Endothelial cell of umbilical vein (primary cell): ENCODE measurements at regions of chr14 and their contacts with region 1.

Region 1: DNA sequence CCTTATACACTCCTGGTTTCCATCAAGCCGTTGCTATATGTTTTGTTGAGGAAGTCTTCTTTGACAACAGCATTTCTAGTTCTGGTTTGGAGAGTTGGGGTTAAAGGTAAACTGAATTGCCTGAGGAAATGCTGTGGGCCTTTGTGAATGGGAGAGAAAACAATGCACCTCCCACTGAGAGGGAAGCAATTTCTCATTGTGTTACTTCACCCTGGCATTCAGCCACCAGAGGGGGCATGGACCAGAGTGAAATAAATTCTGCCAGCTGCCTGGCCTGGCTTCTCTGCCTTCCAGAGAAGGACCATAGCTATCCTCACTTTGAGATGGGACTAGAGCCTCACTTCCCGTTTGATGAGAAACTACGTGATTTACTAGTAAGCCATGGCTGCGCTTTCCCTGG is 475.3 kb downstream of the EGLN3 start:
- DNase-seq: peak; percentile 88
- H3K4me3 ChIP-seq: no peak overlapping the region
- H3K27ac ChIP-seq: no peak overlapping the region
- H3K4me1 ChIP-seq: peaks cover 8% of the 10 kb centered on the region
- H3K27me3 ChIP-seq: no peaks in the 10 kb centered on the region
- CTCF ChIP-seq: peak; percentile 60 to 74
- POLR2A ChIP-seq: no peak

Region 2: DNA sequence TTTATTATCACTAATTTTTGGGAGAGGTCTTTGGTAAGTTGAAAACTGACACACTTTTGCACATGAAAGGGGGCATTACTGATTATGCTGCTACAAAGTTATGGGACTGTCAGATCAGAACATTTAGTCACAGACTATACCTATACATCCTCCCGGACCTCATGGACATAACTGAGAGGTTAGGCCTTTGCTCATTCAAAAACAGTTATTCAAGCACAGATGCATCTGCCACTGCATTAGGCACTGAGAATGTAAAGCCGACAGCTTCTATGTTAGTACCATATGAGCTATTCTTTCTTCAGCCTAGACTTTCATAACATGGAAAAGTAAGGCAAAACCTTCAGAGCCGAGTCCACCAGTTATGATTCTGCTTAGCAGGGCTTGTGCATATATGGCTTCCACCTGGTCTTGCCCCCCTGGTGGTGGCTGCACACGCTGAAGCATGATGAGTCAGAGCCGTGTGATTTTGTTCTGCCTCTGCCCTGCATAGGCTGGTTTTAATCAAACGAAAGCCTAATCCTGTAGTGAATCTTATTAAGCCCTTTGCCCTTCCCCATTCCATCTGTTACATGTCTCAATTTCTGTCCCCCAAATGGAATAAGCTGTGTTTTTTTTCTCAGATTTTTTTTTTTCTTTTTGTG is 1250.8 kb before region 1 on chr14:
- CTCF ChIA-PET with region 1: no interaction called
- POLR2A ChIA-PET with region 1: no interaction called
- dilution Hi-C with region 1: no loop called
- intact Hi-C with region 1: no loop called
- DNase-seq: peak; percentile 6
- H3K4me3 ChIP-seq: no peak overlapping the region
- H3K27ac ChIP-seq: no peak overlapping the region
- H3K4me1 ChIP-seq: no peaks in the 10 kb centered on the region
- H3K27me3 ChIP-seq: peaks cover 0 to 1% of the 10 kb centered on the region in 2 experiments
- CTCF ChIP-seq: peak; percentile 5 to 18
- POLR2A ChIP-seq: no peak

Region 3: DNA sequence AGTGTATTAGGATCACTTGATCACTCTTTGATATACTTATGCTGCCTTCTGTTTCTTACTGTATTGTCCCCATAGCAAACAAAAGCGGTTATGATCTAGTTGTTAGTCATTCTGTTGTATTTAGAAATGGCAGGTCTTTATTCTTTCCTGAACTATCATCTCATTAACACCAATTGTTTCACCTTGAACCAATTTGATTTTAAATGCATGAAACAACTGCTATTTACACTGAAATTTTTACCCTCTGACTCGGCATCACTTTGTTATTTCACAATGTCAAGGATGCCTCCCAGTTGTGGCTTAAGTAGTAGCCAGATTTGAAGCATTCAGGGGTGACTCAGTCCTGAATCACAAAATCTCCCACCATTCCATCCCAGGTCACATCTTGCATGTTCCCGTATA is 171.8 kb after region 1 on chr14:
- CTCF ChIA-PET with region 1: interaction called, 4 read pairs
- POLR2A ChIA-PET with region 1: no interaction called
- dilution Hi-C with region 1: no loop called
- intact Hi-C with region 1: loop called (anchors 2 kb)
- DNase-seq: peak; percentile 85
- H3K4me3 ChIP-seq: no peak overlapping the region
- H3K27ac ChIP-seq: peak overlapping the region; percentile 90
- H3K4me1 ChIP-seq: peaks cover 30% of the 10 kb centered on the region
- H3K27me3 ChIP-seq: no peaks in the 10 kb centered on the region
- CTCF ChIP-seq: no peak
- POLR2A ChIP-seq: no peak

Region 4: GRCh38 chr14:33676135-33676566 is 200.5 kb after region 1 on chr14:
- CTCF ChIA-PET with region 1: interaction called, 7 read pairs
- POLR2A ChIA-PET with region 1: no interaction called
- dilution Hi-C with region 1: no loop called
- intact Hi-C with region 1: loop called (anchors 1 kb)
- DNase-seq: peak; percentile 26
- H3K4me3 ChIP-seq: no peak overlapping the region
- H3K27ac ChIP-seq: no peak overlapping the region
- H3K4me1 ChIP-seq: peaks cover 20% of the 10 kb centered on the region
- H3K27me3 ChIP-seq: no peaks in the 10 kb centered on the region
- CTCF ChIP-seq: peak; percentile 17 to 29
- POLR2A ChIP-seq: no peak

Region 5: DNA sequence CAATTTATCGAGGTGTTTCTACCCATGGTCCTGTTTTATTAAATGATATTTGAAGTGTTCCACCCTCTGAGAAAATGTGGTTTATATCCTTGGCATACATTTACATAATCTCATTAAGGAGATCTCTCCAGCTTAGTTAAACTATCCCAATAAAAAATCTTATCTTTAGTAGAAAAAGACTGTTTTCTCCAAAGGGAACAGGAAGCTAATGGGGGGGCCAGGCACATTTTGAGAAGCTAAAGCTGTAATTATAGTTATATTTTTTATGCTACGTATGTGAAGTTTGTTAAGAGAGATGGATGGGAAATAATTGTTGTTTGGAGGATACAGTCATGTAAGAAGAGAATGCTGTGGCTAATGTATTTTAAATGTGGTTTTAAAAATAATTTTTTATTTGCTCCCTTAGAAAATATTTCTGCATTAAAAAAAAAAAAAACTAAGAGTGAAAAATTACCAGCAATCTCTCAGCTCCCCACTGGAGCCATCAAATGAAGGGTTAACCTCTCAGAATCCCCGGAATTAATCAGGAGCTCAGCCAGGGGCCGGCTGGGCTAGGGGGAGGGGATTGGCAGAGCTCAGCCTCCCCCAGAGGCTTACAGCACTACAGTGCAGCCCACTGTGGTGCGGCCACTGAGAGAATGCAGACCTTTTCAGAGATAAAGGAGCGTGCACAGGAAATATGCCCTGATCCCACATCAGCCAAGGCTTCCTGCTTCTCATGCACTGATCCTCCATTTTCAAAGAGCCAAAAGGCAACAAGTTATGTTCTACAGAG is 289.4 kb after region 1 on chr14:
- CTCF ChIA-PET with region 1: interaction called, 4 read pairs
- POLR2A ChIA-PET with region 1: no interaction called
- dilution Hi-C with region 1: no loop called
- intact Hi-C with region 1: loop called (anchors 10 kb)
- DNase-seq: peak; percentile 64
- H3K4me3 ChIP-seq: no peak overlapping the region
- H3K27ac ChIP-seq: no peak overlapping the region
- H3K4me1 ChIP-seq: peaks cover 36% of the 10 kb centered on the region
- H3K27me3 ChIP-seq: no peaks in the 10 kb centered on the region
- CTCF ChIP-seq: no peak
- POLR2A ChIP-seq: no peak